GM10248 (cell line): ENCODE measurements at regions of chr3 and their contacts with region 1.

Region 1: DNA sequence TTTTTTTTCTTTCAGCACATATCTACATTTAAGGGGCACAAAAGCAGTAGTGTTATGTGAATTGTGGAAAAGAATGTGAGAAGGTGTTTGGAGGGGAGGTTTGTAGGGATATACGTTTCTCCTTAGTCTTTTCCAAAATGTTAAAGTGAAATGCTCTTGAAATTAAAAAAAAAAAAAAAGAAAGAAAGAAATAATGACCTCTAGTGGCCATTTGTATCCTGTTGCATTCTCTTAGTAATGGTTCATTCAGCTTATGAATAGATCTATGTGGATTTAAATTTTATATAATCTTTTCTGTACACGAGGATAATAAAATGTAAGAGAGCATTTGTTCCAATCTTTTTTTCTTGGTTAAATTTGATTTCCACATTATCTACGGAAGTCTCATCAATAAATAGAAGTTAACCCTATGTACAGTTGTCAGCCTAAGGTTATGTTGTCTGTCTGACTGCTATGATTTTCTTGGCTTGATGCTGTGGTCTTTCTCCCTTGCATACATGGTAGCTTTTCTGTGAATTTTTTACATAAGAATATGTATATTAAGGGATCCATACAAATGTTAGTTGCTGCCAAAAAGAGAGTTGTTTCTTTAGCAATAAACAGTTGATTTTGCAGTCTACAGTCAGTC is 1.7 kb downstream of the P2RY13 start:
- DNase-seq: peak; percentile 16
- CTCF ChIP-seq: peak; percentile 42

Region 2: GRCh38 chr3:151315136-151315535 is 12.5 kb before region 1 on chr3:
- CTCF ChIA-PET with region 1: interaction called, 19 read pairs
- POLR2A ChIA-PET with region 1: no interaction called
- DNase-seq: no peak
- CTCF ChIP-seq: no peak